ENCODE measurements at regions of chr15 and their contacts with region 1.

Region 1: DNA sequence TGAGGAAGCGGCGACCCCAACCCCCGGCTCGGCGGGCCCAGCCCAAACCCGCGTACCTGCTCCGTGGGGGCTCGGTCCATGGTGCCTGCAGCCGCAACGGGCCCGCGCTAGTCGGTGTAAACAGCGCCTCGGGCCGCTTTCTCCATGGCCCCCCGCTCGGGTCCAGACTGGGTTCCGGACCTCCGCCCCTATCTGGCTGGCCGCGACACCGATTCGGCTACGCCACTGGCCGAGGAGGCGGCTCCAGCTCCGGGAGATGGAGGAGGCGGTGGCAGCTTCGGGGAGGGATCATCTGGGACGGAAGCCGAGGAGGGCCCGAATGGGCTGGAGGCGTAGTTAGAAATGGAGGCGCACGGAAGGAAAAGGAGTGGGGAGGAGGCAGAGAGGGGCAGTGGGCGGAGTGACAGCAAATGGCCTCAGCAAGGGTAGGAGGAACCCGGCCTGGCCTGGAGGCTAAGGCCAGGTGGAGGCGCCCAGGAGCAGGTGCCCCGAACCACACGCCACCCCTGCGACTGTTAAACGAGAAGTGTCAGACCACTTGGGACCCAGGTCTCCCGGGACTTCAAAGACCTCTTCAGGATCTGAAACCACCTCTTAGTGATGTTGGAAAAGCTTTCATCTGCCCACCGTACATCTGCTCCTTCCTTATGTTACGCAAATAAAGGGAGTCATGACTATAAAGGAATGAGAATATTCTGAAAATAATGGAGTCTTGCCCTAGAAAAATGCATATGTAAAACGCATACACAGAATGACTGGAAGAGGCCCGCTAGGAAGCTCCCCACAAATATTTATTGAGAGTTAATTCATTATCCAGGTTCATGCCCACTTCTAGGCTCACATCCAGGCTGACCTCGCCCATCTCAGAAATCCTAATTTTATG is at the start of gene SECISBP2L:
- DNase-seq: peak; percentile 97
- H3K4me3 ChIP-seq: peak within 1 kb of the TSS; percentile 75 to 98 (median 80)
- H3K27ac ChIP-seq: peak within 1 kb of the TSS; percentile 74
- H3K4me1 ChIP-seq: peaks cover 18% of the 10 kb centered on the region
- H3K27me3 ChIP-seq: peaks cover 0 to 1% of the 10 kb centered on the region in 2 experiments
- CTCF ChIP-seq: peak; percentile 23 to 49
- POLR2A ChIP-seq: peak; percentile 51
- total RNA-seq, gene SECISBP2L: 44.7 and 52.3 TPM in 2 replicates

Region 2: DNA sequence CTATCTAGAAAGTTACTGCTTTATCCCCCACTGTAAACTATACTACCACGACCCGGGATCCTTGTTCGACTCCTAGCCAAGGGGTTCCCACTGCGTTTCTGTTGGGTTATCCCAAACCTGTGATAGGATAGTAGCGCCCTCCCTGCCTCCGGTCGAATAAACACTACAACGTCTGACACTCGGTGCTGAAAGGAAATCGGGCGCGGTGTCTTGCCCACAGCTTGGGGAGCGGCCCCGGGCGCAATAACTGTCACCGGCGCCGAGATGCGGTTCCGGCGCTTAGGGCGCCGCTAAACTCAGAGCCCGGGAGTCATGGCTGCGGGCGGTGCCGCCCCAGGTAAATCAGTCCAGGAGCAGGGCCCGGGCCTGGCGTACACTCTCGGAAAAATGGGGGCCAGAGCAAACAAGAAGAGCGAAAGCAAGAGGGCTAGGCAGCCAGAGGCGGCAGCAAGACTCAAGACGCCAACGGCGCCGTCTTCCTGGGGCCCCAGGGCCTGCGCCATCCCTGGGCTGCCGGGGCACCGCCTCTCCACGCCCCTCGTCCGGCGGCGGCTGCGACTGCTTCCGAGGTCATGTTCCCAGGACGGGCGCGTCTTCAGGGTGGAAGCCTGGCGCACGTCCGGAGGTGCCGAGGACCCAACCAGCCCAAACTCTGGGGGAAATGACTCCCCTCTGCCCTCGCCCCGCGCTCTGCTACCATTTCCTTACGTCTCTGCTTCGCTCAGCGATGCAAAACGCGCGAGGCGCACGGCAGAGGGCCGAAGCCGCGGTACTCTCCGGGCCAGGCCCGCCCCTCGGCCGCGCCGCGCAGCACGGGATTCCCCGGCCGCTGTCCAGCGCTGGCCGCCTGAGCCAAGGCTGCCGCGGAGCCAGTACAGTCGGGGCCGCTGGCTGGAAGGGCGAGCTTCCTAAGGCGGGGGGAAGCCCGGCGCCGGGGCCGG is 715.3 kb before region 1 on chr15 and contains the start of gene DUT:
- CTCF ChIA-PET with region 1: no interaction called
- POLR2A ChIA-PET with region 1: no interaction called
- dilution Hi-C with region 1: no loop called
- intact Hi-C with region 1: loop called (anchors 2 kb)
- DNase-seq: peak; percentile 86
- H3K4me3 ChIP-seq: peak within 1 kb of the TSS; percentile 65 to 92 (median 90)
- H3K27ac ChIP-seq: peak within 1 kb of the TSS; percentile 92
- H3K4me1 ChIP-seq: peaks cover 21% of the 10 kb centered on the region
- H3K27me3 ChIP-seq: no peaks in the 10 kb centered on the region
- CTCF ChIP-seq: no peak
- POLR2A ChIP-seq: peak; percentile 96
- total RNA-seq, gene DUT: 127 and 135 TPM in 2 replicates

Region 3: DNA sequence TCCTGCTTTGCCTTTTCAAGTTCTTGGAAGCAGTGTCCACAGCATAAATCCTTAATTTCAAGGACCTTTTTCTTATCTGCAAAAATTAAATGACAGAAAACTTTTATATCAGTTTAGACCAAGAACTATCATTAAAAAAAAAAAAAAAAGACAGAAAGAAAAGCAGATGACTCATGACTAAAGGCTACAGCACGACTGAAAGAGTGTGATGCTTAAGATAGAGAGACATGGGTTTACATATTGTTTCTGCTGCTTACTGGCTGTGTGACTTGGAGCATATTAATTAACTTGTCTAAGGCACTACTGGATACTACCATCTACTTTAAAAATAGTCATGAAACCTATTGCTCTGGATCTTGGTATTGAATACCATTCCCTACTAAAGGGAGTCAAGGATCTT is 297.9 kb before region 1 on chr15:
- CTCF ChIA-PET with region 1: no interaction called
- POLR2A ChIA-PET with region 1: no interaction called
- dilution Hi-C with region 1: no loop called
- intact Hi-C with region 1: no loop called
- DNase-seq: no peak
- H3K4me3 ChIP-seq: no peak overlapping the region
- H3K27ac ChIP-seq: no peak overlapping the region
- H3K4me1 ChIP-seq: no peaks in the 10 kb centered on the region
- H3K27me3 ChIP-seq: no peaks in the 10 kb centered on the region
- CTCF ChIP-seq: no peak
- POLR2A ChIP-seq: no peak

Region 4: DNA sequence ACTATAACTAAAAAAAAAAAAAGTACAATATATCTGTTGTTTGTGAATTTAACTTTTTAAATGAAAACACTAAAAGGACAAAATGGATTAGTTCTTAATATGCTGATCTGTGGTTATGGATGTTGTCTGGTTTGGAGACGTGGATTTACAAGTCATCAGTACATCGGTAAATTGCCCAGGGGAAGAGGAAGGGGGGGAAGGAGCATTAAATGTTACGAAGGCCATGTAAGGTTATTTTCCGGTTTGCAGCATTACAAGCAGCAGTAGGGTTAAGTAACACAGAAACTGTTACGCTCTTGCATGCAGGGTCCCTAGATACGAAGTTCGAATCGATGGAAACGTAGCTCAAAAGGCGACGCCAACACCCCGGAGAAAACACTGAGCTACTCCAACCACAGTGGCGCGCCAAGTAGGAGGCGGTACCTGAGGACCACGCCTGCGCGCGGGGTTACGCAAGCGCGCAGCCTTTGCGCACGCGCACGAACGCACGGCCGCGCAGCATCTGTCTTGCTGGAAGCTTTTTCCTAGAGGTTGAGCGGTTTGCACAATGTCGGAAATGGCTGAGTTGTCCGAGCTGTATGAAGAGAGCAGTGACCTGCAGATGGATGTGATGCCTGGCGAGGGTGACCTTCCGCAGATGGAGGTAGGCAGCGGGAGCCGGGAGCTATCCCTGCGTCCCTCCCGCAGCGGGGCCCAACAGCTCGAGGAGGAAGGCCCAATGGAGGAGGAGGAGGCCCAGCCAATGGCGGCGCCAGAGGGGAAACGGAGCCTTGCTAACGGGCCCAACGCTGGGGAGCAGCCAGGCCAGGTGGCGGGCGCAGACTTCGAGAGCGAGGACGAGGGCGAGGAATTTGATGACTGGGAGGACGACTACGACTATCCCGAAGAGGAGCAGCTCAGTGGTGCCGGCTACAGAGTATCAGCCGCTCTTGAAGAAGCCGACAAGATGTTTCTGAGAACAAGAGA is 168.5 kb before region 1 on chr15 and contains the start of gene EID1:
- CTCF ChIA-PET with region 1: no interaction called
- POLR2A ChIA-PET with region 1: no interaction called
- dilution Hi-C with region 1: no loop called
- intact Hi-C with region 1: loop called (anchors 5 kb)
- DNase-seq: peak; percentile 97
- H3K4me3 ChIP-seq: peak within 1 kb of the TSS; percentile 25 to 86 (median 67)
- H3K27ac ChIP-seq: peak within 1 kb of the TSS; percentile 29
- H3K4me1 ChIP-seq: peaks cover 13% of the 10 kb centered on the region
- H3K27me3 ChIP-seq: peaks cover under 1 to 7% of the 10 kb centered on the region in 2 experiments
- CTCF ChIP-seq: no peak
- POLR2A ChIP-seq: peak; percentile 86
- total RNA-seq, gene EID1: 146 and 153 TPM in 2 replicates

Region 5: DNA sequence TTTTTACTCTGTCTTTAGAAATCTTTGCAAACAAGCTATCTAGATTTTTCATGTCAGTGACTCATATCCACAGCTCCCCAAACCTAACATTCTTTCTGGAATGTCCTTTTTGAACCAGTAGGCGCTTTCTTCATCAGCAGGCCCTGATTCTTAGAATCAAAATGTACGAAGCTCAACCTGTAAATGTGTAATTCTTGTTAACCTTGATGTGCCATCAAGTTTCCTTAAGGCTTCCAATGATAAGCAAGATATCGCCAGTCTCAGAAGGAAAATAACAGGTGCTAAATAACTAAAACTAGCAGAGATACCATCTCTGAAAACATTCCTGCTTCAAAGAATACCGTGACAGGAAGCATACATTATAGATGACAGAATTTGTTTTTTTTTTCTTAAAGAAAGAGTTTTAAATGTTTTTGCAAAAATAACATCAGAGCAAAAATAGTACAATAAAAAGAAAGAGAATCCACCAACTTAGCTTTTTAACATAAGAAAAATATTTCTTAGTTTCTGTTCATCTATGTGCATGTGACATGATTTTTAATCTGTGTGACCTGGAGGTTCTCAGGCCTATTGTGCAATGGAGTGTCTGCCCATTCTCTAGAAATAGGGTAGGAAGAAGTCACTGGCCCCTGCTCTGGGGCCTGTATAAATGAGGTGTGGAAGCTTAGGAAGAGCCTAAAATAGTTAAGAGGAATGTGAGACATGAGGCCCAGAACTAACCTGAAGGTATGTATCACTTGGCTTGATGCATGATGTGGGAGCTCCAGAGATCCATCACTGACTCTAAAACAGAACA is 14.4 kb after region 1 on chr15:
- CTCF ChIA-PET with region 1: interaction called, 18 read pairs
- POLR2A ChIA-PET with region 1: interaction called, 4 read pairs
- dilution Hi-C with region 1: no loop called
- intact Hi-C with region 1: loop called (anchors 1 kb)
- DNase-seq: peak; percentile 77
- H3K4me3 ChIP-seq: no peak overlapping the region
- H3K27ac ChIP-seq: peak overlapping the region; percentile 55
- H3K4me1 ChIP-seq: peaks cover 20% of the 10 kb centered on the region
- H3K27me3 ChIP-seq: no peaks in the 10 kb centered on the region
- CTCF ChIP-seq: no peak
- POLR2A ChIP-seq: no peak

Region 6: GRCh38 chr15:49225613-49226281 is 179.3 kb after region 1 on chr15:
- CTCF ChIA-PET with region 1: no interaction called
- POLR2A ChIA-PET with region 1: no interaction called
- dilution Hi-C with region 1: no loop called
- intact Hi-C with region 1: loop called (anchors 10 kb)
- DNase-seq: peak; percentile 28
- H3K4me3 ChIP-seq: no peak overlapping the region
- H3K27ac ChIP-seq: no peak overlapping the region
- H3K4me1 ChIP-seq: no peaks in the 10 kb centered on the region
- H3K27me3 ChIP-seq: no peaks in the 10 kb centered on the region
- CTCF ChIP-seq: peak; percentile 19 to 46
- POLR2A ChIP-seq: no peak